ENCODE measurements at regions of chr17 and their contacts with region 1.

Region 1: GRCh38 chr17:43316522-43317142 is 82.2 kb upstream of the ARL4D start:
- DNase-seq: no peak
- H3K4me3 ChIP-seq: no peak overlapping the region
- H3K27ac ChIP-seq: no peak overlapping the region
- H3K4me1 ChIP-seq: no peaks in the 10 kb centered on the region; a peak in 1 of 7 replicates
- H3K27me3 ChIP-seq: no peaks in the 10 kb centered on the region
- CTCF ChIP-seq: no peak
- EP300 ChIP-seq: no peak
- POLR2A ChIP-seq: no peak
- RAD21 ChIP-seq: no peak

Region 2: GRCh38 chr17:43015579-43015978 is 301.1 kb before region 1 on chr17:
- CTCF ChIA-PET with region 1: no interaction called
- POLR2A ChIA-PET with region 1: interaction called, 23 read pairs
- DNase-seq: no peak
- H3K4me3 ChIP-seq: no peak overlapping the region
- H3K27ac ChIP-seq: peak overlapping the region; percentile 21; the same call in 1 of the 2 replicates
- H3K4me1 ChIP-seq: peaks cover 6 to 18% (median 12%) of the 10 kb centered on the region in 4 experiments
- H3K27me3 ChIP-seq: no peaks in the 10 kb centered on the region
- CTCF ChIP-seq: no peak
- EP300 ChIP-seq: no peak
- POLR2A ChIP-seq: no peak
- RAD21 ChIP-seq: no peak

Region 3: GRCh38 chr17:43033948-43034881 is 282.4 kb before region 1 on chr17:
- CTCF ChIA-PET with region 1: no interaction called
- POLR2A ChIA-PET with region 1: interaction called, 11 read pairs
- DNase-seq: no peak
- H3K4me3 ChIP-seq: peak overlapping the region in 3 of 4 experiments; percentile 6 to 48 (median 14); a peak in 4 of 8 replicates
- H3K27ac ChIP-seq: peak overlapping the region; percentile 64
- H3K4me1 ChIP-seq: peaks cover 14 to 30% (median 25%) of the 10 kb centered on the region in 4 experiments
- H3K27me3 ChIP-seq: no peaks in the 10 kb centered on the region
- CTCF ChIP-seq: no peak
- EP300 ChIP-seq: no peak
- POLR2A ChIP-seq: no peak
- RAD21 ChIP-seq: no peak

Region 4: GRCh38 chr17:43125133-43125966 is 191.3 kb before region 1 on chr17 and contains the start of gene BRCA1:
- CTCF ChIA-PET with region 1: no interaction called
- POLR2A ChIA-PET with region 1: interaction called, 29 read pairs
- DNase-seq: peak; percentile 93 to 95
- H3K4me3 ChIP-seq: peak within 1 kb of the TSS; percentile 81 to 99 (median 82)
- H3K27ac ChIP-seq: peak within 1 kb of the TSS; percentile 81
- H3K4me1 ChIP-seq: peaks cover 0 to 4% (median 3%) of the 10 kb centered on the region in 4 experiments; a peak in 4 of 7 replicates
- H3K27me3 ChIP-seq: no peaks in the 10 kb centered on the region
- CTCF ChIP-seq: no peak
- EP300 ChIP-seq: no peak; a peak in 1 of 3 replicates
- POLR2A ChIP-seq: peak; percentile 60 to 76; a peak in 2 of 3 replicates
- RAD21 ChIP-seq: no peak
- total RNA-seq, gene BRCA1: 39.2 and 40.3 TPM in 2 replicates

Region 5: GRCh38 chr17:43211480-43212402 is 104.9 kb before region 1 on chr17 and contains the start of gene TMEM106A:
- CTCF ChIA-PET with region 1: interaction called, 4 read pairs
- POLR2A ChIA-PET with region 1: interaction called, 123 read pairs
- DNase-seq: peak; percentile 34 to 85
- H3K4me3 ChIP-seq: peak within 1 kb of the TSS; percentile 59 to 82 (median 76)
- H3K27ac ChIP-seq: peak within 1 kb of the TSS; percentile 64; the same call in 1 of the 2 replicates
- H3K4me1 ChIP-seq: peaks cover 0 to 5% (median 3%) of the 10 kb centered on the region in 4 experiments; a peak in 4 of 7 replicates
- H3K27me3 ChIP-seq: peaks cover 0 to 2% (median 0%) of the 10 kb centered on the region in 4 experiments; a peak in 1 of 7 replicates
- CTCF ChIP-seq: peak; percentile 26 to 49 (median 41); a peak in 3 of 4 replicates
- EP300 ChIP-seq: no peak
- POLR2A ChIP-seq: peak in 1 of 2 experiments; percentile 66; a peak in 2 of 3 replicates
- RAD21 ChIP-seq: peak in 1 of 2 experiments; percentile 7; a peak in 1 of 4 replicates
- total RNA-seq, gene TMEM106A: 4.1 and 5.4 TPM in 2 replicates

Region 6: GRCh38 chr17:43381204-43381603 is 64.6 kb after region 1 on chr17:
- CTCF ChIA-PET with region 1: no interaction called
- POLR2A ChIA-PET with region 1: no interaction called
- DNase-seq: no peak
- H3K4me3 ChIP-seq: no peak overlapping the region
- H3K27ac ChIP-seq: no peak overlapping the region
- H3K4me1 ChIP-seq: peaks cover 0 to 3% (median 0%) of the 10 kb centered on the region in 4 experiments; a peak in 2 of 7 replicates
- H3K27me3 ChIP-seq: no peaks in the 10 kb centered on the region
- CTCF ChIP-seq: no peak
- EP300 ChIP-seq: no peak
- POLR2A ChIP-seq: no peak
- RAD21 ChIP-seq: no peak

Region 7: DNA sequence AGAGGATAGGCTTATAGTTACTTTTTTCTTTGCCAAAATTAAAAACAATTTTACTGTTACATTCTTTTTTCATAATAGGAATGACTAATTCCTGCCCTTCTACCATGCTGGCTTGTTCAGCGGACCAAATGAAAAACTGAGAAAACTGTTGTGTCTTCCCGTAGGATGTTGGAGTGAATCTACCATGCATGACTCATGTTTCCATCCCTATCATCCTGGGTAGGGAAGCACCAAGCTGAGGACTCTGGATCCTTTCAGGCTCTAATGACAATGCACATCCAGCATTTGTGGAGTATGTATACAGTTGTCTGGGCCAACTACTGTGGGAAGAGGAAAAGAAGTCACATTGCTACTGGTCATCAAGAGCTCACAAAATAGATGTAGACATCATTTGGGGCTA is 126.1 kb after region 1 on chr17:
- CTCF ChIA-PET with region 1: no interaction called
- POLR2A ChIA-PET with region 1: no interaction called
- DNase-seq: no peak
- H3K4me3 ChIP-seq: no peak overlapping the region
- H3K27ac ChIP-seq: no peak overlapping the region
- H3K4me1 ChIP-seq: peaks cover 0 to 2% (median 0%) of the 10 kb centered on the region in 4 experiments; a peak in 3 of 7 replicates
- H3K27me3 ChIP-seq: no peaks in the 10 kb centered on the region
- CTCF ChIP-seq: no peak
- EP300 ChIP-seq: no peak
- POLR2A ChIP-seq: no peak
- RAD21 ChIP-seq: no peak